Head of caudate nucleus (tissue), 42 donors: ENCODE measurements at regions of chr9 and their contacts with region 1.

Region 1: DNA sequence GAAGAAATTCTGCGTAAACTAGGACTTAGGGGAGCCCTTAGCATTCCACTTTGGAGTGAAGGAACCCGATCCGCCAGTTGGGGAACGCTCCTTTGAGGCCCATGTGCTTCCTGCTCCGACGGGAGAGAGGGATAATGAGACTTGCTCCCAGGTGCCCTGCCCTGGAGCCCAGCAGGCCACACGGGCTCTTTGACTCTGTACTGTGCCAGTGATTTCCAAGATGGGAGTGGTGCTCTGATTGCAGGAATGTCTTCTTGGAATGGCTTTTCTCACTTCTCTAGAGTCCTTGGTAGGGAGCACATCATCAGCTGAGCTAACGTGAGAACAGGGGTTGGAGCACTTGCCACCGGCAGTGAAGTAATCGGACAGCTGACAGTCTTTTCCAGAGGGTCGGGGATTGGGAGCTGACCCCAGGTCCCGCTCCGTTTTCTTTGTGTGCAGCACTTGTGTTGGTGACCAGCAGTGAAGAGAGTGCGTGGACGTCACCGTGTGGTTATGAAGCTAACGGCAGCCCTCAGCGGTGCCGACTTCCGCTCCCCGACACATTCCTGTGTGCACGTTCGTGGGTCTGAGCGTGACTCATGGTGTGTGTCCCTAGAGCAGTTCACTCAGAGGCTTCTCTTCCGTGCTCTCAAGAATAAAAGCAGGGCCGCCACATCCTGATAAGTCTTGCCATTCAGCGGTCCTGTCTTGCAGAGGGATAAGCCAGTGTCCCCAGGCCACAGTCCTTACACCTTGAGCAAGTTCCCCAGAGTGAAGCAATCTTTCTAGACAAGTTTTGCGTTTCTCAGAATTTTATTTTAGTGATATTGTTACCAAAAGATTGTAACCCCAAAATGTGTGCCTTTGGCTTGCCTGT is 25.6 kb downstream of the ABL1 start:
- DNase-seq: peak in 36 of 42 donors; percentile 29 to 83 (median 55)

Region 2: GRCh38 chr9:130707225-130707976 is 153.3 kb before region 1 on chr9:
- intact Hi-C with region 1: loop called (anchors 5 kb)
- DNase-seq: peak in 39 of 42 donors; percentile 27 to 90 (median 66)

Region 3: DNA sequence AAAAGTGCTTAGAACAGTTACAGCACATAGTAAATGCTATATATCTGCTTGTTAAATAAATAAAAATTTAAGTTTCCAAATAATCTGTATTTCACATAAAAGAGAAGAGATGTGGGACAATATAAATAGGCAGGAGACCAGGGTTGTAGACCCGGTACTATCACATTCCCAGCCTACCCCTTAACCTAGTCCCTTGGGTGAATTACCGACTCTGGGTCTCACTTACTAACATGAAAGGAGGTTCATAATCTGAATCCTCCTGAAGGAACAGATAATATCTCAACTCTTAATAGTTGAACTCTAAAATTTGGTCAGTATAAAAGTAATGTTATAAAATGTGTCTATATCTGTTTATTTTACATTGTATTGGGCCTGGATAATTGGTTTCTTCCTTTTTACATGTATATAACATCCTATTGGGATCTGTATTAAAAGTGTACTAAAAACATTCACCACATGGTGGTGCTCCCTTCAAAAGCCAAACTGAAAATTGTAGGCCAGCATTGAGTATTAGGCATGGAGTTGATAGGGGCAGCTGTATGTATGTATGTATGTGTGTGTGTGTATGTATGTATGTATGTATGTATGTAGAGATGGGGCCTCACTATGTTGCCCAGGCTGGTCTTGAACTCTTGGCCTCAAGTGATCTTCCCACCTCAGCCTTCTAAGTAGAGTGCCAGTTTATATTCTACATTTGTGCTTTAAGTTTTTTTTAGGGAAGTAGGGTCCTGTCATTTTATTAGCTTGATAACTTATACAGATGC is 89.8 kb before region 1 on chr9:
- intact Hi-C with region 1: loop called (anchors 5 kb)
- DNase-seq: peak in 9 of 42 donors; percentile 14 to 71 (median 33)

Region 4: DNA sequence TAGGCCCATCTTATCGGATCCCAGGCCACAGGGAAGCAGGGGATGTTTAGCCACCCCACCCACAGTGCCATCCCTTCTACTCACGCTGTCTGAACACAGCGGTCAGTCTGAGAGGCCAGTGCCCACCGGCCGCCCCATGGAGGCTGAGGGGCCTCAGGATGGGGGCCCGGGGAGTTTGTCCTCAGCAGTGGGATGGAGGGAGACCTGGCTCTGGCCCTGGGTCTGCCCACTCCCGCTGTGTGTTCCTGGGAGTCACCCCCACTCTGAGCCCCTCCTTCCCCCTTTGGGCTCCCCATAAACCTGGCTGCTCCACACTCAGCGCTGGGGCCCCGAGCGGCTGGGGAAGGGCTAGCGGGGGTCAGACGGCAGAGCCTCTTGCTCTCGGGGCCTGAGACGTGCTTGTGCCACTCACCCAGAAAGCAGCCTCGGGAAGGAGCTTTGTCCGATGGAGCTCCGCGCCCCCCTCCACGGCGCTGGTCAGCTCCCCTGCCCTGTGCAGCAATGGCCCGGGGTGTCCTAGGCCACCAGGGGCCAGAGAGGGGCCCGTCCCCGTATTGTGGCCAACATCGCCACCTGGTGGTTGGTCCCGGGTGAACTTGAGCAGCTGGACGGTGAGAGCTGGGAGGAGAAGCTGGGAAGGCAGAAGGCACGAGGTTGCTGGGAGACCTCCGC is 137.4 kb after region 1 on chr9:
- intact Hi-C with region 1: no loop called
- DNase-seq: peak; percentile 33 to 93 (median 82)

Region 5: GRCh38 chr9:131246618-131247017 is 385.9 kb after region 1 on chr9:
- intact Hi-C with region 1: no loop called
- DNase-seq: no peak